ENCODE measurements at regions of chr18 and their contacts with region 1.

Region 1: GRCh38 chr18:55415258-55415871 is 172.6 kb downstream of the TCF4 start:
- H3K4me3 Mint-ChIP-seq: no peak overlapping the region
- H3K27ac Mint-ChIP-seq: no peak overlapping the region
- H3K4me1 Mint-ChIP-seq: peaks cover 13% of the 10 kb centered on the region
- H3K27me3 Mint-ChIP-seq: no peaks in the 10 kb centered on the region

Region 2: DNA sequence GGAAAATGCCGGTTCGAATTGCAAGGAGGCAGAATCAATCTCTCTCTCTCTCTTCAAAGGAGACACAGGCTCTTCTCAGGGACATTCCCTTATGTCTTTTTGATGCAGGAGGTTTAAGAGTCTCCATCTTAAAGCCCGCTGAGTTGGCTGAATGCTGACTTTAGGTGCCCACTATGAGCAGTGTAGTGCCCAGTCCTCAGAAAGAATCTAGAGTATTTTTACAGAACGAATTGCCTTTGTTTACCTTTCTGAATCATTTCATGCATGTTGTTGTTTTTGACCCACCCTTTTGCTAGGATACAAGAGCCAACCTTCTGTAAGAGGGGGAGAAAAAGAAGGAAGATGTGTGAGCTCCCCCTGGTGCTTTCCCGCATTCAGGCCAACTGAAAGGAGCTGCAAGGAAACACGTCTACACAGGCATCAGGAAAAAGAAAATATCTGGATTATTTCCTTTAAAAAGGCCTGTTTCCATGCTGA is 366.2 kb after region 1 on chr18:
- intact Hi-C with region 1: loop called (anchors 1 kb)
- H3K4me3 Mint-ChIP-seq: no peak overlapping the region
- H3K27ac Mint-ChIP-seq: no peak overlapping the region
- H3K4me1 Mint-ChIP-seq: peaks cover 19% of the 10 kb centered on the region
- H3K27me3 Mint-ChIP-seq: peaks cover 24% of the 10 kb centered on the region